ENCODE measurements at regions of chr1 and their contacts with region 1.

Region 1: DNA sequence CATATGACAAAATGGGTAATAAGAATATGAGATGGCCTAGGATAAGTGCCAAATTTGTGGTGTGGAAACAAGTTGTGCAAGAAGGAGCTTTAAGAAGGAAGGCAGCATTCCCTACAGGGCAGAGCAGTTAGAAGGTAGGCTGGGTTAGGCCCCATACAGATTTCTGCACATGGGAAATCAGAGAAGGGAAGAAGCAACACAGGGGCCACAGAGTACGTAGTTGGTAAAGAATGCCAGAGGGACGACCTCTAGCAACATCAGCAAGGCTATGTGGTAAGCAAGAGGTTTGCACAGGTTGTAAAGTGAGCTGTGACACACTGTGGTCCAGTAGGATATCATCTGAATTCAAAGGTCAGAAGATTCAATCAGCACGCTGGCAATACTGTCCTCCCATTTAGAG is 765.6 kb upstream of the B3GALT2 start:
- DNase-seq: no peak
- ATAC-seq: peak in 3 of 4 donors; percentile 45 to 46 (median 45)
- H3K4me3 ChIP-seq: no peak overlapping the region
- H3K27ac ChIP-seq: peak overlapping the region in 11 of 12 donors; percentile 12 to 70 (median 35)
- H3K4me1 ChIP-seq: peaks cover 0 to 5% (median 0%) of the 10 kb centered on the region in 12 donors
- H3K27me3 ChIP-seq: no peaks in the 10 kb centered on the region
- CTCF ChIP-seq: no peak
- POLR2A ChIP-seq: no peak

Region 2: DNA sequence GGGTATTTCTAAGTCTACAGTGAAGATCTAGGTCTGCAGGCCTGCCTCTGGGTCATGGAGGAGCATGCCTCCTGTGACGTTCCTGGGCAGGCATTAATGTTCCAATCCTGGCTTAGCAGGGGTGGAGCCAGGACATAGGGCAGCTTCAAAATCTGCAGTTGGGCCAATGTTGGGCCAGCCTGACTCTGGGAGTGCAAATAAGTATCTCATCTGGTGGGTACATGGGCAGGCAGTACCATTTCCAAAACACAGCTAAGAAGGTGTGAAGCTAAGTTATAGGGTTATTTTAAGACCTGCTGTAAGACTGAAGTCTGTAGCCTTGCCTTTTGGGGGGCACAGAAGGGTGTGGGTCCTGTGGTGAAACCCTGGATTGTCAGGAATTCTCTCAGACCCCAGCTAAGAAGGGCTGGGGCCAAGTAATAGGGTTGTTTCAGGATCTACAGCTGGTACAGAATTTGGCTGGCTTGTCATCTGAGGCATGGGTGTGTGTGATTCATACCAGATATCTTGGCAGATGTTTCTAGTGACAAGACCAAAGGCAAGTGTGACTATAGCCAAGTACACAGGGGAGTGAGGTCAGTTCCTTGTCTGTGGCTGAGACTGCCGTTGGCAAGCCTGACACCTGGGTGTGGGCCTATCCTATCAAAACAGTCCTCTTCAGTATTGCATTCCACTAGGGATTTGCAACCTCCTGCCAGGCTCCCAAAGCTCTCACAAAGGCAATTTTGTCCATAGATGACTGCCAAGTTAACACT is 296.9 kb before region 1 on chr1:
- intact Hi-C with region 1: loop called in 1 of 10 experiments (anchors 10 kb)
- DNase-seq: peak in 4 of 5 donors; percentile 34 to 78 (median 62)
- ATAC-seq: peak; percentile 87 to 99 (median 94)
- H3K4me3 ChIP-seq: no peak overlapping the region
- H3K27ac ChIP-seq: peak overlapping the region in 2 of 12 donors; percentile 11 to 42
- H3K4me1 ChIP-seq: peaks cover 0 to 12% (median 0%) of the 10 kb centered on the region in 12 donors
- H3K27me3 ChIP-seq: no peaks in the 10 kb centered on the region
- CTCF ChIP-seq: no peak
- POLR2A ChIP-seq: no peak

Region 3: GRCh38 chr1:193787061-193787460 is 164.9 kb before region 1 on chr1:
- intact Hi-C with region 1: no loop called
- DNase-seq: no peak
- ATAC-seq: no peak
- H3K4me3 ChIP-seq: no peak overlapping the region
- H3K27ac ChIP-seq: no peak overlapping the region
- H3K4me1 ChIP-seq: no peaks in the 10 kb centered on the region
- H3K27me3 ChIP-seq: no peaks in the 10 kb centered on the region
- CTCF ChIP-seq: no peak
- POLR2A ChIP-seq: no peak